Breast epithelium (tissue), 4 donors: ENCODE measurements at regions of chr11 and their contacts with region 1.

Region 1: GRCh38 chr11:30186748-30187147 is 44.1 kb upstream of the FSHB start:
- DNase-seq: no peak
- H3K4me3 ChIP-seq: no peak overlapping the region
- H3K27ac ChIP-seq: no peak overlapping the region
- H3K4me1 ChIP-seq: no peaks in the 10 kb centered on the region
- H3K27me3 ChIP-seq: no peaks in the 10 kb centered on the region
- CTCF ChIP-seq: no peak
- POLR2A ChIP-seq: no peak

Region 2: GRCh38 chr11:31921081-31921480 is 1734.3 kb after region 1 on chr11:
- intact Hi-C with region 1: loop called (anchors 10 kb)
- DNase-seq: no peak
- H3K4me3 ChIP-seq: no peak overlapping the region
- H3K27ac ChIP-seq: no peak overlapping the region
- H3K4me1 ChIP-seq: no peaks in the 10 kb centered on the region
- H3K27me3 ChIP-seq: no peaks in the 10 kb centered on the region
- CTCF ChIP-seq: no peak
- POLR2A ChIP-seq: no peak